AG04449 (cell line): ENCODE measurements at regions of chr1 and their contacts with region 1.

Region 1: GRCh38 chr1:243325305-243325890 is 69.6 kb downstream of the SDCCAG8 start:
- DNase-seq: peak; percentile 49
- H3K4me3 ChIP-seq: no peak overlapping the region
- CTCF ChIP-seq: peak; percentile 26

Region 2: GRCh38 chr1:242467556-242468145 is 857.7 kb before region 1 on chr1:
- CTCF ChIA-PET with region 1: interaction called, 12 read pairs
- POLR2A ChIA-PET with region 1: no interaction called
- DNase-seq: no peak
- H3K4me3 ChIP-seq: no peak overlapping the region
- CTCF ChIP-seq: peak; percentile 40

Region 3: GRCh38 chr1:243354511-243355153 is 29.2 kb after region 1 on chr1:
- CTCF ChIA-PET with region 1: no interaction called
- POLR2A ChIA-PET with region 1: no interaction called
- DNase-seq: no peak
- H3K4me3 ChIP-seq: no peak overlapping the region
- CTCF ChIP-seq: no peak

Region 4: DNA sequence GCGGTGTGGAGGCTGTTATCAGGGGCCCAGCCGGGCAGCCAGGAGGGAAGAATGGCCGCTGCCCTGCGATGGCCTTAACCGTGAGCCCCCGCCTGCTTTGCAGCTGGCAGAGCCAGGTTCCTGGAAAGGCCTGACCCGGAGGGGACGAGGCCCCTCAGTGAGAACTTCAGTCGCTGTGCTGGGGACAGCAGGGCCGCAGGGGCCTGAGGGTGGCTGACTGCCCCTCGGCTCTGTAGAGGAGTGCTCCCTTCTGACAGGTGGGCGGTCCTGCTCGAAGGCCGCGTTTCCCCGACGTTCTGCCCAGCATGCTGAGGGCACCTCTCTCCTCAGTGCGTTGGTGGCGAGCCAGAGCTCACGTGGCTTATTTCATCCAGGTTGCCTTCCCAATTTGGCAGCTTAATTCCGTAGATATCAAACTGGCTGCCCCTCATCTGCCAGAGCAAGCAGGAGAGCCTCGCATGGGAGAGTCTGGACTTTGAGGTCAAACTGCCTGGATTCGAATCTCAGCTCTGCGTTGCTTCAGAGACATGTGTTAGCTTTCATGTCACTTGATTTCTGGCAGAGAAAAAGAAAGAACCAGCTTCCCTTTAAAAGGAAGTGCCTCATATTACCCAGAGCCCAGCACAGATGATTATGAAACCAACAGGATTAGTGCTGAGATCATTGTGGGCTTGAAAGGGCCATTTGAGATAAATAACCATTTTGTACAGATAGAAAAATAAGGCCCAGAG is 170.2 kb after region 1 on chr1:
- CTCF ChIA-PET with region 1: no interaction called
- POLR2A ChIA-PET with region 1: no interaction called
- DNase-seq: no peak
- H3K4me3 ChIP-seq: no peak overlapping the region
- CTCF ChIP-seq: no peak

Region 5: GRCh38 chr1:243596431-243597062 is 271.1 kb after region 1 on chr1:
- CTCF ChIA-PET with region 1: no interaction called
- POLR2A ChIA-PET with region 1: no interaction called
- DNase-seq: peak; percentile 92
- H3K4me3 ChIP-seq: no peak overlapping the region
- CTCF ChIP-seq: no peak